ENCODE measurements at regions of chr9 and their contacts with region 1.

Region 1: DNA sequence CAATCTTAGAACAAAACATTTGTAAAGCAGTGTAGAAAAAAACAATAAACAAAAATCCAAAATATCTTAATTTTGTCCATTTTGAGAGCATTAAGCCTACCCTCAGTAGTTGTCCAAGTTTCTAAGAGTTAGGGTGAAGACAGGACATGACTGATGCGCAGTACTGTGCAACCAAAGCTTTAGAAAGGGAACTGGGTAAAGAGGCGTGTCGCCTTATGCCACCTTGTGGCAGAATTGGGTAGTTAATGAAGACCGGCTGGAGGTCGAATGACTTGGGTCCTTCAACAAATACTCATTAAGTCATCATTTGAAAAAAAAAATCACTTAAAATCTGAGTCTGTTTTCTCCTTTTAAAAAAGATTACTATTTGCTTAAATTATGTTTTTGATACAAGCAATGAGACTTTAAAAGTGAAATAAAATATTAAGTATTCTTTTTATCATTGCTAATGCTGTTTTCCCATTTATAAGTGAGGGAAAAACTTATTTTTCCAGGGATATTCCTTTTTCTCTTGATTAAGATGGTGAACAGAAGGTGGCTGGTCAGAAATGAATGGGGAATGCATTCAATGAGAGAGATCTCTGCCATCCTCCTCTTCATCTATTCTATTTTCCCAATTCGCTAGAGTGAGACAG is 3.5 kb upstream of the RNF20 start:
- DNase-seq: peak; percentile 69
- H3K4me3 ChIP-seq: no peak overlapping the region
- H3K27ac ChIP-seq: no peak overlapping the region
- H3K4me1 ChIP-seq: peaks cover 2 to 17% (median 16%) of the 10 kb centered on the region in 4 donors
- H3K27me3 ChIP-seq: no peaks in the 10 kb centered on the region
- CTCF ChIP-seq: peak; percentile 19 to 75 (median 71)
- EP300 ChIP-seq: no peak
- POLR2A ChIP-seq: no peak

Region 2: GRCh38 chr9:100269656-100270055 is 1260.5 kb before region 1 on chr9:
- intact Hi-C with region 1: no loop called
- DNase-seq: no peak
- H3K4me3 ChIP-seq: no peak overlapping the region
- H3K27ac ChIP-seq: no peak overlapping the region
- H3K4me1 ChIP-seq: no peaks in the 10 kb centered on the region
- H3K27me3 ChIP-seq: no peaks in the 10 kb centered on the region
- CTCF ChIP-seq: no peak
- EP300 ChIP-seq: no peak
- POLR2A ChIP-seq: no peak

Region 3: GRCh38 chr9:101311758-101312420 is 218.3 kb before region 1 on chr9:
- intact Hi-C with region 1: no loop called
- DNase-seq: no peak
- H3K4me3 ChIP-seq: no peak overlapping the region
- H3K27ac ChIP-seq: no peak overlapping the region
- H3K4me1 ChIP-seq: peaks cover 0 to 4% (median 0%) of the 10 kb centered on the region in 4 donors
- H3K27me3 ChIP-seq: no peaks in the 10 kb centered on the region
- CTCF ChIP-seq: peak in 3 of 4 experiments; percentile 40 to 70 (median 54)
- EP300 ChIP-seq: no peak
- POLR2A ChIP-seq: no peak

Region 4: DNA sequence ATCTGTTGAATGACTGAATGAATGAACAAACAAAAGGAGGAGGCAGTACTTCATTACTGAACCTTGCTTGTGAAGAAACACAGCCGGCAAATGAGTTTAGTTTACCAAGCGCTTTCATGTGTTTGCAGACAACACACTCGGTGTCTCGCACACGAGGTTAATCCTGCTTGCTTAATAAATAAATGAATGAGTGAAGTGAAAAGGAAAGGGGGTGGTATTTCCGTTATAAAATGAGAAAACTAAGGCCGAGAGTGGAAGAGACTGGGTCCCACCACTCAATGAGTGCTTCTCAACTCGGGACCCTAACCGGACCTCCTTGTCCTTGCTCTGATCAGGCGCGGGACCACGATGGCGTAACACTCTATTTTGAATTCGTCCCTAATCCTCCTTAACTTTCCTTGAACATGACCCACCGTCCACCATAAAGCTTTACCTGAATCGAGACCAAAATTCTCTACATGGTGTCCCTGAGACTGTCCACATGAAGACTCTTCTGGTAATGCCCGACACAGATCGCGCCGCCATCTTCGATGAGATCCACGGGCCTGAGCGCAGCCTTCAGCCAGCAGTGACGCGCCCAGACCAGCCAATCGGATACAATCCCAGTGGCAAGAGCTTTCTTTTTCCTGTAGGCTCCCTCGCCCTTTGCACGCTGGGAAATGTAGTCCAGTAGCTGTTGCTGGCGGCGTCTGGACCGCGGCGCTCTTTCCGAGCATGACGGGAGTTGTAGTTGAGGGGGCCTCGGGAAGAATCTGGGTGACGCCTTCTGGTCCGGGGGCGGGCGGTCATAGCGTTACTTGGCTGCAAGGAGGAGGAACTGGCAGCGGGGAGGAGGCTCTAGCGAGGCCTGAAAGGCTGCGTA is 131.9 kb before region 1 on chr9 and contains the starts of genes MRPL50 and ZNF189:
- intact Hi-C with region 1: loop called (anchors 1 kb)
- DNase-seq: peak; percentile 99
- H3K4me3 ChIP-seq: peak within 1 kb of the TSS; percentile 57 to 77 (median 66)
- H3K27ac ChIP-seq: peak within 1 kb of the TSS; percentile 82 to 92 (median 88)
- H3K4me1 ChIP-seq: peaks cover 0 to 50% (median 37%) of the 10 kb centered on the region in 4 donors
- H3K27me3 ChIP-seq: no peaks in the 10 kb centered on the region
- CTCF ChIP-seq: no peak
- EP300 ChIP-seq: peak in 1 of 4 donors; percentile 9
- POLR2A ChIP-seq: peak; percentile 39 to 68
- total RNA-seq, gene MRPL50: 10.0 to 15.3 (median 12.3) TPM
- total RNA-seq, gene ZNF189: 21.2 to 26.0 (median 24.1) TPM

Region 5: GRCh38 chr9:101449140-101449721 is 81.0 kb before region 1 on chr9:
- intact Hi-C with region 1: loop called (anchors 2 kb)
- DNase-seq: peak; percentile 79
- H3K4me3 ChIP-seq: peak overlapping the region; percentile 51 to 60 (median 57)
- H3K27ac ChIP-seq: peak overlapping the region; percentile 61 to 72 (median 72)
- H3K4me1 ChIP-seq: peaks cover 0 to 6% (median 0%) of the 10 kb centered on the region in 4 donors
- H3K27me3 ChIP-seq: no peaks in the 10 kb centered on the region
- CTCF ChIP-seq: peak; percentile 24 to 58 (median 49)
- EP300 ChIP-seq: no peak
- POLR2A ChIP-seq: no peak

Region 6: GRCh38 chr9:101458955-101459631 is 71.1 kb before region 1 on chr9:
- intact Hi-C with region 1: loop called (anchors 1 kb)
- DNase-seq: no peak
- H3K4me3 ChIP-seq: no peak overlapping the region
- H3K27ac ChIP-seq: no peak overlapping the region
- H3K4me1 ChIP-seq: no peaks in the 10 kb centered on the region
- H3K27me3 ChIP-seq: no peaks in the 10 kb centered on the region
- CTCF ChIP-seq: peak; percentile 50 to 68 (median 58)
- EP300 ChIP-seq: no peak
- POLR2A ChIP-seq: no peak

Region 7: DNA sequence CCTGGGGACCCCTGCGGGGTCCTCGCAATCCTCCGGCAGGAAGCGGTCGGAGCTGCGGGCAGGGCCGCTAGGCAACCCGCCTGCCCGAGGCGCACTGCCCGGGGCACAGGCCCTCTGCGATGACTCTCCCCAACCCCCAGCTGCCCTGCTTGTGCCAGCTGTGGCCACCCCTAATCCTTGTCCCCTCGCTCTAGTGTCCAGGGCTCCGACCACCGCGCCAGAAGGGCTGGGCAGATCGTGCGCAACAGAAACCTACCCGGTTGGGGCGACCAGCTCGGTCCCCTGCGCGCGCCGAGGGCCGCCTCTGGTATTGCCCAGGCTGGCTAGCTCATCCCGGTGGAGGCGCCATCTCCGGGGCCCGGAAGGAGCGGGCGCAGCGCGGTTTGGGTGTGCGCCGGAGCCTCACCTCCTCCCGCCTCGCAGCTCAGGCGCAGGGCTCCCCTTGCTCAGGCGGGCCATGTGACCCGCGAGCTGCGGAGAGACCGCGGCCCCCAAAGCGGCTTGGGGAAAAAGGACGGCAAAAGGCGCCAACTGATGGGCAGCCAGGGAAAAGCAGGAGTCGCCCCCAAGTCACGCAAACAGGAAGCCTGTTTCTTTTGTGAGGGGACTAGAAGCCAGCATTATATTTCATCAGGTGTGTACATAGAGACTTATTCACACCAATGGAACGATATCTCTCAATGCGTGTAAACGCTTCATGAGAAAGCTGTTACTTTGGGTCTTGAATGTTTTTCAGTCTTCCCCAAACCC is 43.3 kb before region 1 on chr9:
- intact Hi-C with region 1: loop called (anchors 2 kb)
- DNase-seq: peak; percentile 67
- H3K4me3 ChIP-seq: peak overlapping the region; percentile 51 to 84 (median 72)
- H3K27ac ChIP-seq: peak overlapping the region; percentile 73 to 89 (median 86)
- H3K4me1 ChIP-seq: peaks cover 0 to 26% (median 7%) of the 10 kb centered on the region in 4 donors
- H3K27me3 ChIP-seq: peaks cover 0 to 7% (median 5%) of the 10 kb centered on the region in 3 donors
- CTCF ChIP-seq: no peak
- EP300 ChIP-seq: no peak
- POLR2A ChIP-seq: peak in 1 of 2 donors; percentile 40

Region 8: GRCh38 chr9:101628173-101628572 is 98.0 kb after region 1 on chr9:
- intact Hi-C with region 1: no loop called
- DNase-seq: no peak
- H3K4me3 ChIP-seq: no peak overlapping the region
- H3K27ac ChIP-seq: no peak overlapping the region
- H3K4me1 ChIP-seq: no peaks in the 10 kb centered on the region
- H3K27me3 ChIP-seq: no peaks in the 10 kb centered on the region
- CTCF ChIP-seq: no peak
- EP300 ChIP-seq: no peak
- POLR2A ChIP-seq: no peak

Measured in sigmoid colon (tissue), 7 donors.